ENCODE measurements at regions of chr2 and their contacts with region 1.

Region 1: DNA sequence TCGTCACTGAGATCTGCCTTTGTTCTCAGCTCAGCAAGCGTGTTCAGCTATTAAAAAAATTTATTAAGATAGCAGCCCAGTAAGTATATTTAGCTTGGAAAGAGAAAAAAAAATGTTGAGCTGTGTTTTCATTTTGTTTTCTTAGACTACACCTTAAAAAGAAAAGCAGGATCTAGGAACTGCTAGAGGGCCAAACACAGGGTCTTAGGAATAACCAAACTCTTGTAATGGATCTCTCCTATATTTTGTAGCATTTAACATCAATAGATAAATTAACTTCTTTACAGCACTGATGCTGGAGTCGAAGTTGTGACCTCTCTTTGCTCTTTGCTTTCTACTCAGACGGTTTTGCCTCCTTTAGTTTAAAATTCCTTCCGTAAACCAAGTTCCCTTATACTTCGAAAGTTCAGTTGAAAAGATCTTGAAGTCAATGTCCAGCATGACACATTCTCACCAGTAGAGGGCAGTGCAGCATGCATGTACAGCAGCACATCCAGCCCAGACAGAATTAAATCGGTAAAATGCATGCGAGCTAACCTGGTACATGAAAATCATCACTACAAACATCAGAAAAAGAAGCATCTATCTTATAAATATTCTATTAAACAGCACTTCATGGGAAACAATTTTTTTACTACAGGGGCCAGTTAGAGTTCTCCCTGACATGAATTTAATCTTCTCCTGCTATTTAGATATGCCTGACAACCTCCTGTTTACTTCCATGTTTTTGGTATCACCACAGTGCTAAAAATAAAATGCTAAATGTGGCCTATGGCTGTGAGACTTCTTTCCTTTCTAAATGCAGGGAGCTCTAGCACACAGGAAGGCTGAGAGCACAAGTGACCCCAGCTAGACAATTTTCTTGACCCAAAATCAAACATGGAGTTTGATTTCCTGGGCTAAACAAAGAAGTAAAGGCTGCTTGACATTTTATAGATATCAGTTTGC is 48.2 kb upstream of the MAP3K20 start:
- DNase-seq: peak; percentile 13
- H3K4me3 ChIP-seq: no peak overlapping the region
- H3K27ac ChIP-seq: peak overlapping the region in 3 of 4 donors; percentile 12 to 49 (median 26)
- H3K4me1 ChIP-seq: peaks cover 0 to 11% (median 7%) of the 10 kb centered on the region in 3 donors
- H3K27me3 ChIP-seq: no peaks in the 10 kb centered on the region
- CTCF ChIP-seq: peak; percentile 73 to 96 (median 94)
- POLR2A ChIP-seq: no peak

Region 2: GRCh38 chr2:172735582-172736423 is 291.7 kb before region 1 on chr2 and contains the start of gene RAPGEF4:
- intact Hi-C with region 1: no loop called
- DNase-seq: no peak
- H3K4me3 ChIP-seq: peak within 1 kb of the TSS; percentile 48 to 76 (median 61)
- H3K27ac ChIP-seq: peak within 1 kb of the TSS in 2 of 4 donors; percentile 21 to 52
- H3K4me1 ChIP-seq: peaks cover 0 to 19% (median 16%) of the 10 kb centered on the region in 3 donors
- H3K27me3 ChIP-seq: peaks cover 0 to 46% (median 1%) of the 10 kb centered on the region in 4 donors
- CTCF ChIP-seq: no peak
- POLR2A ChIP-seq: no peak
- total RNA-seq, gene RAPGEF4: 2.6 to 11.1 (median 2.9) TPM

Region 3: GRCh38 chr2:173205375-173205774 is 177.9 kb after region 1 on chr2:
- intact Hi-C with region 1: loop called (anchors 5 kb)
- DNase-seq: no peak
- H3K4me3 ChIP-seq: no peak overlapping the region
- H3K27ac ChIP-seq: peak overlapping the region in 3 of 4 donors; percentile 68 to 72 (median 68)
- H3K4me1 ChIP-seq: peaks cover 0 to 28% (median 5%) of the 10 kb centered on the region in 3 donors
- H3K27me3 ChIP-seq: no peaks in the 10 kb centered on the region
- CTCF ChIP-seq: no peak
- POLR2A ChIP-seq: no peak

Region 4: DNA sequence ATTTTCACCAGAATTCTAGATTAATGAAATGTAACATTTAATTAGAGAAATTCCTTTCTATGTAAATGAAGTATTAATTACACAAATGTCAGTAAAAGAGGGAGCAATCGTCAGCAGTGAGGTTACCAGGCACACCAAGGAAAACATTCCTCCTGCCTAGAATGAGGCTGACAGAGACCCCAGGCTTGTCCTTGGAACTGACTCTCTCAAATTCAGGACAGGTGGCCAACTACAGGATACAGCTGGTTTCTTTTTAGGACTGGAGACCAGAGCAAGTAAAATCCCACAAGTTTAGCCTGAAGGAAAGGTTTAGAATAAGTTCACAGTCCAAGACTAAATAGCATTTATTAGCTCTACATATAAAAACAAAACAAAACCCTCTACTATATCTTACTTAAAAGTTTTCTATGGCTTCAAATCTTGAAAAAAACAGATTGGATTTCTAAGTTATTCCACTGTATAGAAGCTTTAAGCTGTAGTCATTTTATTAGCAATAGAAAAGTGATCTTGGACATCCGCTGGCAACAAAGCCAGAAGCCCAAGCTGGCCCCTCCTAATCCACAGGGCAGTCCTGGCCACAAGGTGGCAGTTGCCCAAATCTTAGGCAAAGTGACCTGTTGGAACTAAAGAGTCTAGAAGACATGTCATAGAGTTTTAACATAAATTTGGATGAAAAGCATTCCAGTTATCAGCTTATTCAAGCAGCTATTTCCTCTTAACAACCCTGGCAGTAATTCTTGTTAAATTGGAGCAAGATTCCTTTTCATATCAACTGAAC is 856.8 kb after region 1 on chr2:
- intact Hi-C with region 1: no loop called
- DNase-seq: no peak
- H3K4me3 ChIP-seq: no peak overlapping the region
- H3K27ac ChIP-seq: no peak overlapping the region
- H3K4me1 ChIP-seq: peaks cover 0 to 17% (median 0%) of the 10 kb centered on the region in 3 donors
- H3K27me3 ChIP-seq: no peaks in the 10 kb centered on the region
- CTCF ChIP-seq: peak; percentile 32 to 50 (median 44)
- POLR2A ChIP-seq: no peak

Measured in esophagus squamous epithelium (tissue), 5 donors.